CD4-positive, alpha-beta T cell (primary cell): ENCODE measurements at regions of chr15 and their contacts with region 1.

Region 1: GRCh38 chr15:49645903-49646302 is 25.1 kb downstream of the DTWD1 start:
- DNase-seq: no peak
- ATAC-seq: no peak
- H3K4me3 ChIP-seq: no peak overlapping the region
- H3K4me3 Mint-ChIP-seq: no peak overlapping the region
- H3K27ac ChIP-seq: no peak overlapping the region
- H3K27ac Mint-ChIP-seq: no peak overlapping the region
- H3K4me1 ChIP-seq: no peaks in the 10 kb centered on the region
- H3K4me1 Mint-ChIP-seq: peaks cover 6% of the 10 kb centered on the region
- H3K27me3 ChIP-seq: no peaks in the 10 kb centered on the region
- H3K27me3 Mint-ChIP-seq: no peaks in the 10 kb centered on the region
- CTCF ChIP-seq: no peak

Region 2: DNA sequence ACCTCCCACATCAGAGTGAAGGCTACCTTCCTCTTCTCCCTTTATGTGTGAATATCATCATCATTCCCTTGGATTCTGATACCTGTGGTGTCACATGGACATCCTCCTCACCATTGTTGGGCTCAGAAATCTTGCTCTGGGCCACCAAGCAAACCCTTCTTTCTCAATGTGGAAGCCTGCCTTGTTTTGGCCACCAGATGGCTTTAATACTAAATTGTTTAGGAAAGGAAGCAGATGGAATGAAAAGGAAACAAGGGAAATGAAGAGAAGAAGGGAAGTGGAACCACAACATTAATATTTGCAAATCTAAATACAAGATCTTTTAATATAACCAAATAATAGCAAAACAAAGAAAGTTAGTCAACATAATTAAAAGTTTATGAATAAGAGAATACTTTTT is 39.3 kb before region 1 on chr15:
- CTCF ChIA-PET with region 1: no interaction called
- POLR2A ChIA-PET with region 1: no interaction called
- intact Hi-C with region 1: loop called in 1 of 2 experiments (anchors 5 kb)
- DNase-seq: no peak
- ATAC-seq: no peak
- H3K4me3 ChIP-seq: no peak overlapping the region
- H3K4me3 Mint-ChIP-seq: no peak overlapping the region
- H3K27ac ChIP-seq: no peak overlapping the region
- H3K27ac Mint-ChIP-seq: no peak overlapping the region
- H3K4me1 ChIP-seq: no peaks in the 10 kb centered on the region
- H3K4me1 Mint-ChIP-seq: no peaks in the 10 kb centered on the region
- H3K27me3 ChIP-seq: no peaks in the 10 kb centered on the region
- H3K27me3 Mint-ChIP-seq: no peaks in the 10 kb centered on the region
- CTCF ChIP-seq: no peak

Region 3: GRCh38 chr15:50390554-50391287 is 744.8 kb after region 1 on chr15:
- CTCF ChIA-PET with region 1: no interaction called
- POLR2A ChIA-PET with region 1: no interaction called
- intact Hi-C with region 1: no loop called
- DNase-seq: peak in 3 of 14 experiments; percentile 3 to 8 (median 4)
- ATAC-seq: no peak
- H3K4me3 ChIP-seq: no peak overlapping the region
- H3K4me3 Mint-ChIP-seq: no peak overlapping the region
- H3K27ac ChIP-seq: no peak overlapping the region
- H3K27ac Mint-ChIP-seq: no peak overlapping the region
- H3K4me1 ChIP-seq: no peaks in the 10 kb centered on the region
- H3K4me1 Mint-ChIP-seq: no peaks in the 10 kb centered on the region
- H3K27me3 ChIP-seq: no peaks in the 10 kb centered on the region
- H3K27me3 Mint-ChIP-seq: no peaks in the 10 kb centered on the region
- CTCF ChIP-seq: no peak